ENCODE measurements at regions of chr2 and their contacts with region 1.

Region 1: GRCh38 chr2:238139196-238140039 is 950 bp downstream of the KLHL30 start:
- DNase-seq: no peak
- ATAC-seq: peak; percentile 3
- H3K4me3 ChIP-seq: peak overlapping the region; percentile 19 to 40
- H3K27ac ChIP-seq: no peak overlapping the region
- H3K4me1 ChIP-seq: no peaks in the 10 kb centered on the region
- H3K27me3 ChIP-seq: no peaks in the 10 kb centered on the region

Region 2: DNA sequence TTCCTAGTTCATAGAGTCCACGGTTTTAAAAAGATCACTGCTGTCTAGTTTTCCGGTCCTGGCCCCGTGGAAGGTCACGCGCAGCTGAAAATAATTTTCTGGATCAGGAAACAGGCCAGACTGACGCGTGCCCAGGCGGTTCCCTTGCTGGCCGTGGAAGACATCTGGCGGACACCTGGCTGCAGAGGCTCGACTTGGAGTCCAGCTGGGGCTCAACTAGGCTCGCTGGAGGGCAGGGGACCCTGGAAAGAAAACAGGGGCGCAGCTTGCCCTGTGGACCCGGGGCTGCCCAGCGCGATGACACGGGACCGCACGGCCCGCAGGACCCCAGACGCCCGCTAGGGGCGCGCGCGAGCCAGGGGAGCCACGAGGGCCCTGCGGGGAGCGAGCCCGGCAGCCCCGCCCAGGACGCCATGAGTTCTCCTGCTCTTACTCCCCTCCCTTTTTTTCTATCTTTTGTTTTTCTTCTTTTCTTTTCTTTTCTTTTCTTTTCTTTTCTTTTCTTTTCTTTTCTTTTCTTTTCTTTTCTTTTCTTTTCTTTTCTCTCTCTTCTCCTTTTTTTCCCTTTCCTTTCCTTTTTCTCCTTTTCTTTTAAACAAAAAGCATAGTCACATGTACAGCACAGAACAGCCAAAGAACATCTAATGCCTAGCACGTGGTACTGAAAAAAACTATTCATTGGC is 215.8 kb before region 1 on chr2:
- intact Hi-C with region 1: loop called in 1 of 2 experiments (anchors 5 kb)
- DNase-seq: peak; percentile 89 to 93
- ATAC-seq: peak; percentile 95
- H3K4me3 ChIP-seq: no peak overlapping the region
- H3K27ac ChIP-seq: peak overlapping the region in 1 of 2 donors; percentile 86
- H3K4me1 ChIP-seq: no peaks in the 10 kb centered on the region
- H3K27me3 ChIP-seq: no peaks in the 10 kb centered on the region

Region 3: GRCh38 chr2:238024986-238025385 is 114.4 kb before region 1 on chr2:
- intact Hi-C with region 1: no loop called
- DNase-seq: no peak
- ATAC-seq: no peak
- H3K4me3 ChIP-seq: no peak overlapping the region
- H3K27ac ChIP-seq: no peak overlapping the region
- H3K4me1 ChIP-seq: no peaks in the 10 kb centered on the region
- H3K27me3 ChIP-seq: no peaks in the 10 kb centered on the region

Measured in aorta (tissue), 5 donors.